Psoas muscle (tissue), 8 donors: ENCODE measurements at regions of chr2 and their contacts with region 1.

Region 1: GRCh38 chr2:96638144-96639121 is at the start of gene KANSL3:
- DNase-seq: peak; percentile 89 to 96
- ATAC-seq: peak; percentile 89 to 93 (median 92)
- H3K4me3 ChIP-seq: peak within 1 kb of the TSS; percentile 73
- H3K27ac ChIP-seq: peak within 1 kb of the TSS; percentile 88
- H3K4me1 ChIP-seq: peaks cover 35% of the 10 kb centered on the region
- H3K27me3 ChIP-seq: no peaks in the 10 kb centered on the region
- CTCF ChIP-seq: no peak
- total RNA-seq, gene KANSL3: 49.2 to 55.3 (median 50.6) TPM

Region 2: DNA sequence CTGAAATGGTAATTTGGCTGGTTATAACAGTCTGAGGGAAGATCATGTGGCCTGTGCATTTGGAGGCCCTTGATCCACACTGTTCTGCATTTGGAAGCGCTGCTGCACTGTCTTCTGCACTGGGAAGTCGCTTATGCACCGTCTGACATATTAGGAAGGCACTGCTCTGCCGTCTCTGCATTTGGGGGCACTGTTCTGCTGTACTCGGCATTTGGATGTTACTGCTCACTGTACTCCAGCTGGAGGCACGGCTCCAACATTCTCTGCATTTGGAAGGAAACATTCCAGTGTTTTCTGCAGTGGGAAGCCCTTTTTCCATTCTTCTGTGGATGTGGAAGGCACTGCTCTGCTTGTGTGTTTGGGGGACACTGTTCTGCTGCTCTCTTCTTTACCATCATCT is 1373.8 kb before region 1 on chr2:
- intact Hi-C with region 1: no loop called
- DNase-seq: no peak
- ATAC-seq: no peak
- H3K4me3 ChIP-seq: no peak overlapping the region
- H3K27ac ChIP-seq: no peak overlapping the region
- H3K4me1 ChIP-seq: no peaks in the 10 kb centered on the region
- H3K27me3 ChIP-seq: peaks cover 0 to 1% (median 0%) of the 10 kb centered on the region in 3 donors
- CTCF ChIP-seq: no peak

Region 3: DNA sequence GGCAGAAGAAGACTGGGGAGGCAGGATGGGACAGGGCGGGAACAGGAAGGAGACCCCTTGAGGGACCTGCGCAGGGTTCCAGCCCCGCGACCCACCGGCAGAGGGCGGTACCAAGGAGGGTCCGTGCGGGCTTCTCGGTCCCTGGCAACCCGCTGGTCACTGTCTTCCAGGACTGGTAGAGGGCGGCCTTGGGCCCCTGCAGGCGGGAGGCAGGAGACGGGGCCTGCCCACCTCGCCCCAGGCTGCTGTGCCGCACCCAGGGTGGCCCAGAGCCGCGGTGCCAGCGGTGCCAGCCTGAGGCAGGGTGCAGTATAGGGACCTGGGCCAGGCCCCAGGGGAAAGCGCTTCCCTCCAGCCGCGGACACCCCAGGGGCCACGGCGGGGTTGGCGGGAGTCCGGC is 167.8 kb before region 1 on chr2:
- intact Hi-C with region 1: no loop called
- DNase-seq: peak; percentile 42 to 61
- ATAC-seq: peak; percentile 68 to 77 (median 72)
- H3K4me3 ChIP-seq: peak overlapping the region; percentile 53
- H3K27ac ChIP-seq: no peak overlapping the region
- H3K4me1 ChIP-seq: no peaks in the 10 kb centered on the region
- H3K27me3 ChIP-seq: peaks cover 0 to 6% (median 0%) of the 10 kb centered on the region in 3 donors
- CTCF ChIP-seq: peak; percentile 53

Region 4: DNA sequence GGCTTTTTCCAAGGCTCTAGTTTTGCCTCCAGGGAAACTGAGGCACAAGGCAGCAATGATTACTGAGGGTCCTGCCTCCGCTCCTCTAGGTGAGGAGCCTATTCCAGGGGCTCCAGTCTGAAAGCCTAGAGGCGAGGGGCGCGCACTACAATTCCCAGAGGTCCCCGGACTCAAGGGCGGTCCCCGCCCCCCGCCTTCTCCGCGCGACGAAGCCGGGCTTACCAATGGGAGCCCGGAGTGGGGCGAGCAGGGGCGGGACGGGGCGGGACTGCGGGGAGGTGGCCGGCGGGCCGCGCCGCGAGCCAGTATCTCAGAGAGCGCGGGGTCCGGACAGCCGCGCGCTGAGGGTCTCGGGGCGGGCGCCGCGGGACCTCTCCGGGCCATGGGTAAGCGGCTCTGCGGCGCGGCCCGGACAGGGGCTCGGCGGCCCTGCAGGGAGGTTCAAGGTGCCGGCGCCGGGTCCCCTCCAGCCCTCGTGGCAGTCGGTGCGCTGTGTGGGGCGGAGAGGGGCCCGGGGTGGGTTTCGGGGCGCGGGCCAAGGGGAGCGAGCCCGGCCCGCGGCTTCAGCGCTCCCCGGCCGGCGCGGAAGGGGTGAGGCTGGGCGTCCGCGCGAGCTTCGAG is 101.9 kb before region 1 on chr2 and contains the start of gene ARID5A:
- intact Hi-C with region 1: loop called in 1 of 2 experiments (anchors 5 kb)
- DNase-seq: peak; percentile 95 to 96
- ATAC-seq: peak; percentile 69 to 76 (median 71)
- H3K4me3 ChIP-seq: peak within 1 kb of the TSS; percentile 91
- H3K27ac ChIP-seq: peak within 1 kb of the TSS; percentile 98
- H3K4me1 ChIP-seq: peaks cover 83% of the 10 kb centered on the region
- H3K27me3 ChIP-seq: no peaks in the 10 kb centered on the region
- CTCF ChIP-seq: peak; percentile 34
- total RNA-seq, gene ARID5A: 25.7 to 73.6 (median 37.8) TPM

Region 5: GRCh38 chr2:96594691-96595152 is 43.7 kb before region 1 on chr2:
- intact Hi-C with region 1: loop called in 1 of 2 experiments (anchors 5 kb)
- DNase-seq: no peak
- ATAC-seq: no peak
- H3K4me3 ChIP-seq: no peak overlapping the region
- H3K27ac ChIP-seq: peak overlapping the region; percentile 92
- H3K4me1 ChIP-seq: peaks cover 29% of the 10 kb centered on the region
- H3K27me3 ChIP-seq: no peaks in the 10 kb centered on the region
- CTCF ChIP-seq: no peak

Region 6: DNA sequence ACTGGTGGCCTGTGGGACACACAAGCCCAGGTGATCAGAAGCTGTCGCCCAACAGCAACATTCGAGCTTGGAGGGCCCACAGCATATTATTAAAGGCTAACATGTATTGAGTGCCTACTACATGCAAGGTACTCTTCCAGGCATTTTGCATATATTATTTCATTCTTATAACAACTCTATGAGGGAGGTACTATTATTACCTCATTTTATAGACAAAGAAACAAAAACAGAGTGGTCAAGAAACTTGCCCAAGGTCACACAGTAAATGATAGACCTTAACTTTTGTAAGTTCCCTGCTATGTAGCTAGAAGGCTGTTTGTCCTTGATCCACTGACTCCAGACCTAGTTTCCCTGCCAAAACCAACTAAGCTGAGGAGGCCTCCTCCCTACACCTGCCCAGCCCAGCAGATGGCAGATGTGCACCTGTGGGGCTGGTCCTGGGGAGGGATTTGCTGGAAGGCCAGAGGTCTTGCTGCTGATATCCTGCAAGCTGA is 36.1 kb before region 1 on chr2:
- intact Hi-C with region 1: loop called (anchors 5 kb)
- DNase-seq: no peak
- ATAC-seq: peak in 1 of 4 donors; percentile 15
- H3K4me3 ChIP-seq: no peak overlapping the region
- H3K27ac ChIP-seq: peak overlapping the region; percentile 92
- H3K4me1 ChIP-seq: peaks cover 47% of the 10 kb centered on the region
- H3K27me3 ChIP-seq: no peaks in the 10 kb centered on the region
- CTCF ChIP-seq: no peak

Region 7: GRCh38 chr2:96665083-96665569 is 26.7 kb after region 1 on chr2:
- intact Hi-C with region 1: loop called in 1 of 2 experiments (anchors 1 kb)
- DNase-seq: peak in 1 of 2 donors; percentile 64
- ATAC-seq: peak; percentile 94 to 96 (median 94)
- H3K4me3 ChIP-seq: no peak overlapping the region
- H3K27ac ChIP-seq: peak overlapping the region; percentile 86
- H3K4me1 ChIP-seq: peaks cover 18% of the 10 kb centered on the region
- H3K27me3 ChIP-seq: no peaks in the 10 kb centered on the region
- CTCF ChIP-seq: no peak

Region 8: DNA sequence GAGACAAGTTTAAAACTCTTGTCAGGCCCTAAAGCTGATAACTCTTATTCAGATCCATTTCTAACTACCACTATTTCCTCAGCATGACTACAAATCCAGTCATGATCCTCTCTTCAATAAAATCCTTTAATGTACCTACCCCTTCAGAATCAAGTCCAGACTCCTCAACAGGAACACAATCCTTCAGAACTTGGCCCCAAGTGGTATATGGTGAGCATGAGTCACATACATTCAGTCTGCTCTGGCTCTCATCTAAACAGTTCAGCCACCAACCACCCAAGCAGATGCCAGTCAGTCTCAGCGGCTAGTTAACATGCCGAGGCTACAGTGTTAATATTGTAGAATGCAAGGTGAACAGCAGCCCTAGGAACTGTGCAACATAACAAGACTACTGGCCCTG is 91.8 kb after region 1 on chr2:
- intact Hi-C with region 1: no loop called
- DNase-seq: no peak
- ATAC-seq: no peak
- H3K4me3 ChIP-seq: no peak overlapping the region
- H3K27ac ChIP-seq: no peak overlapping the region
- H3K4me1 ChIP-seq: peaks cover 11% of the 10 kb centered on the region
- H3K27me3 ChIP-seq: no peaks in the 10 kb centered on the region
- CTCF ChIP-seq: no peak

Region 9: DNA sequence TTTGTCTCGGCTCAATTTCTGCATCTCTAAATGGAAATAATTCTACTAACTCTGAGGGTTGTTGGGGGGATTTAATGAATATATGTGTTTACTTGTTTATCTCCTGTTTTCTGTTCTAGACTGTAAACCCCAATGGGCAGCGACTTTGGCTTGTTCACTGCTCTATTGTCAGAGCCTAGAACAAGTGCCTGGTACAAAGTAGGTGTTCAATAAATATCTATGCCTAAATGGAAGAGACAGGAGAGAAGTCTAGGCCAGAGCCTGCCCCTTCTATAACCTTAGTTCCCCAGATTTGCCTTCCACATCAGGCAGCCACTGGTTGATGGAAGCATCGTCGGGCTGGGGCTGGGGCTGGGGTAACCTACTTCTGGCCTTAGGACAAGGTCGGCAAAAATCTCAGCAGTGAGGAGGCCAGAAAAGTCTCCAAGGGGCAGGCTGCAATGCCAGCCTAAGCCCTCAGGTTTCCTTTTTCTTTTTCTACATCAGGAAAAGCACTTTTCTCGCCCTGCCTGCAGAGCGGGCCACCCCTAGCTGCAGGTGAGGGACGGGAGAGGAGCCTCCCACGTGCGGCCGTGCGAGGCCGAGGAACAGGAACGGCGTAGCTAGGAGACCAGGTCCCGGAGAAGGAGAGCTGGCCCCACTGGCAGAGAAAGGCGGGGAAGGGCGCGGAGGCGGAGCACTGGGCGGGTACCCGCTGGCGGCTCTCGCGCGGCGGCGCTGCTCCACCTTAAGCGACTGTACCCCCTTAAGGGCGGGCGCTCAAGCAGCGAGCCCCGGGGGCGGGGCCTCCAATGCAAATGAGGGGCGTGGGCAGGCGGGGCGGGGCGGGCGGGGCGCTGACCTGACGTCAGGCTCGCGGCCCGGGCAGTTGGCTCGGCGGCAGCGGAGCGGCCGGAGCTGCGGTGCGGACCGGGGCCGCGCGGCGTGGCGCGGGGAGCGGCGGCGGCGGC is 121.9 kb after region 1 on chr2 and contains the start of gene CNNM4:
- intact Hi-C with region 1: loop called (anchors 5 to 10 kb)
- DNase-seq: peak; percentile 95 to 97
- ATAC-seq: peak; percentile 93 to 96 (median 94)
- H3K4me3 ChIP-seq: peak within 1 kb of the TSS; percentile 70
- H3K27ac ChIP-seq: peak within 1 kb of the TSS; percentile 76
- H3K4me1 ChIP-seq: peaks cover 34% of the 10 kb centered on the region
- H3K27me3 ChIP-seq: no peaks in the 10 kb centered on the region
- CTCF ChIP-seq: no peak
- total RNA-seq, gene CNNM4: 9.9 to 28.8 (median 14.3) TPM

Region 10: DNA sequence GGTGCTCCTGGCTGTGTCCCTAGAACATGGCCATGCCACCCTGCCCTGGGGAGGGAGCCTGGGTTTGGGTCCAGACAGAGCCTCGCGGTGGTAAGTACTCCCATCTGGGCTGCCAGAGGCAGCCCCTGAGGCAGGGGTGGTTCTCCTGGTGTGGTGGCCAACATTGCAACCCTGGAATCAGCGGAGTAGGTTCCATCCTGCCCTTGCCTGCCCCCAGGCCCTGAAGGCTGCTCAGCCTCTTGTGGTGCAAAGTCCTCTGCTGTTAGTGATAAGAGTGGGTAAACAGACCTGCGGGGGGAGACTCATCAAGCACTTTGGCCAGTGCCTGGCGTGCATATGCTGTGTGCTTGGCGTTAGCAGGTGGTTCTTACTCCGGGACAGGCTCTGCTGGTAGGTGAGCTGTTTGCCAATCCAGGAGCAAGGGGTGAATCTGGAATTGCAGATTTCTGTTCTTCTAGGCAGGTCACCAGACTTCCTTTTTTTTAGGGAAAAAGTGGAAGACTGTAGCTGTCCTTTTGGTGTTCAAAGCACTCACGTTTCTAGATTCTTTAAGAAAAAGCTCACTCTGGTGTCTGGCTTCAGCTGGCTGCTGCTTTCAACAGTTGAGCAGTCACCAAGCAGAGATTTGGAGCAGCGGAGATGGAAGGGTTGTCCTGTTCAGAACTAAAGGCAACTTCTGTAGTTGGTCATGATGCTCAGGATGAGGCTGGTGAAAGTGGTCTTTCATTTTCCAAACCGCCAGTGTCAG is 180.9 kb after region 1 on chr2:
- intact Hi-C with region 1: no loop called
- DNase-seq: no peak
- ATAC-seq: no peak
- H3K4me3 ChIP-seq: peak overlapping the region; percentile 37
- H3K27ac ChIP-seq: peak overlapping the region; percentile 27
- H3K4me1 ChIP-seq: peaks cover 56% of the 10 kb centered on the region
- H3K27me3 ChIP-seq: no peaks in the 10 kb centered on the region
- CTCF ChIP-seq: no peak